CD8-positive, alpha-beta T cell (primary cell): ENCODE measurements at regions of chr3 and their contacts with region 1.

Region 1: GRCh38 chr3:133910422-133910821 is 14.7 kb upstream of the RAB6B start:
- DNase-seq: no peak
- ATAC-seq: no peak
- H3K4me3 ChIP-seq: no peak overlapping the region
- H3K4me3 Mint-ChIP-seq: no peak overlapping the region
- H3K27ac ChIP-seq: no peak overlapping the region
- H3K27ac Mint-ChIP-seq: no peak overlapping the region
- H3K4me1 ChIP-seq: no peaks in the 10 kb centered on the region
- H3K4me1 Mint-ChIP-seq: no peaks in the 10 kb centered on the region
- H3K27me3 ChIP-seq: peaks cover 0 to 2% of the 10 kb centered on the region in 2 experiments
- H3K27me3 Mint-ChIP-seq: peaks cover 20% of the 10 kb centered on the region
- CTCF ChIP-seq: no peak

Region 2: DNA sequence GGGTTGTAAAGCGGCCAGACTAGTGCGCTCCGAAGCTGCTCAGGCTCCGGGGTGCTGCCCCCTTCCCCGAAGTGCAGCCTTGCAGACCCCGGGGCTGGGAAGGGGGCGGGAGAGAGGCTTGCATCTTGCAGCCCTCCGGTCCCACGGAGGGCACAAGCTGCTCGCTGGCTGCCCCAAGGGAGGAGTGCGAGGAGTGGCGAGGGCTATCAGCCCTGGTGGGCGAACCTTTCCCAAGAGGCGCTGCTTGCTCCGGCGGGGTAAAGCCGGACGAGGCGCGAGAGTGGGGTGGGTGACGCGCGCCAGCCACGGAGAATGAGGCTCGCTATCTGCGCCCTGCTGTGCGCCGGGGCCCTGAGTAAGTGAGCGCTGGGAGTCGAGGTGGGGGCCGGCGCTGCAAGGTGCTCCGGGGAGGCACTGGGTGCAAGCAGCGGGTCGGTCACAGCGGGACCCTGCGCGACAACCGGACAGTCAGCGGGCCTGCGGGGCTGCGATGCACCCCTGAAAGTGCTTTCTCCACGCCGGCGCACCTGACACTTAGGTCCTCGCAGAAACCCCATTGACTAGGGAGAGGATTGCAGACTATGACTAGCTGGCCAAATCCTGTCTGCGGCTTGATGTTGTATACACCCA is 236.0 kb before region 1 on chr3:
- CTCF ChIA-PET with region 1: no interaction called
- POLR2A ChIA-PET with region 1: no interaction called
- intact Hi-C with region 1: loop called in 1 of 2 experiments (anchors 5 kb)
- DNase-seq: no peak
- ATAC-seq: no peak
- H3K4me3 ChIP-seq: no peak overlapping the region
- H3K4me3 Mint-ChIP-seq: no peak overlapping the region
- H3K27ac ChIP-seq: no peak overlapping the region
- H3K27ac Mint-ChIP-seq: no peak overlapping the region
- H3K4me1 ChIP-seq: no peaks in the 10 kb centered on the region
- H3K4me1 Mint-ChIP-seq: peaks cover 3% of the 10 kb centered on the region
- H3K27me3 ChIP-seq: peaks cover 10 to 15% of the 10 kb centered on the region in 2 experiments
- H3K27me3 Mint-ChIP-seq: peaks cover 56% of the 10 kb centered on the region
- CTCF ChIP-seq: no peak

Region 3: GRCh38 chr3:133949438-133949837 is 39.0 kb after region 1 on chr3:
- CTCF ChIA-PET with region 1: no interaction called
- POLR2A ChIA-PET with region 1: no interaction called
- intact Hi-C with region 1: no loop called
- DNase-seq: no peak
- ATAC-seq: no peak
- H3K4me3 ChIP-seq: no peak overlapping the region
- H3K4me3 Mint-ChIP-seq: no peak overlapping the region
- H3K27ac ChIP-seq: no peak overlapping the region
- H3K27ac Mint-ChIP-seq: no peak overlapping the region
- H3K4me1 ChIP-seq: no peaks in the 10 kb centered on the region
- H3K4me1 Mint-ChIP-seq: no peaks in the 10 kb centered on the region
- H3K27me3 ChIP-seq: no peaks in the 10 kb centered on the region
- H3K27me3 Mint-ChIP-seq: peaks cover 4% of the 10 kb centered on the region
- CTCF ChIP-seq: no peak

Region 4: DNA sequence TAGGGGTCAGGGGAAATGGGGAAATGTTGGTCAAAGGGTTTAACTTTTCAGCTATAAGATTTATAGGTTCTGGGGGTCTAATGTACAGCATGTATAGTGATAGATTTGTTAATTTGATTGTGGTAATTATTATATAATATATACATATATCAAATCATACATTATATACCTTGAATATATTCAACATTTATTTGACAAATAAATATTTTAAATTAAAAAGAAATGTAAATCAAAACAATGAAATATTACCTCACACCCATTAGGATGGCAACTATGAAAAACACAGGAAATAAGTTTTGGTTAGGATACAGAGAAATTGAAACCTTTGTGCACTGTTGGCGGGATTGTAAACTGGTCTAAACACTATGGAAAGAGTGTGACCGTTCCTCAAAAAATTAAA is 204.3 kb after region 1 on chr3:
- CTCF ChIA-PET with region 1: no interaction called
- POLR2A ChIA-PET with region 1: no interaction called
- intact Hi-C with region 1: no loop called
- DNase-seq: no peak
- ATAC-seq: no peak
- H3K4me3 ChIP-seq: no peak overlapping the region
- H3K4me3 Mint-ChIP-seq: no peak overlapping the region
- H3K27ac ChIP-seq: no peak overlapping the region
- H3K27ac Mint-ChIP-seq: no peak overlapping the region
- H3K4me1 ChIP-seq: no peaks in the 10 kb centered on the region
- H3K4me1 Mint-ChIP-seq: no peaks in the 10 kb centered on the region
- H3K27me3 ChIP-seq: no peaks in the 10 kb centered on the region
- H3K27me3 Mint-ChIP-seq: no peaks in the 10 kb centered on the region
- CTCF ChIP-seq: no peak

Region 5: DNA sequence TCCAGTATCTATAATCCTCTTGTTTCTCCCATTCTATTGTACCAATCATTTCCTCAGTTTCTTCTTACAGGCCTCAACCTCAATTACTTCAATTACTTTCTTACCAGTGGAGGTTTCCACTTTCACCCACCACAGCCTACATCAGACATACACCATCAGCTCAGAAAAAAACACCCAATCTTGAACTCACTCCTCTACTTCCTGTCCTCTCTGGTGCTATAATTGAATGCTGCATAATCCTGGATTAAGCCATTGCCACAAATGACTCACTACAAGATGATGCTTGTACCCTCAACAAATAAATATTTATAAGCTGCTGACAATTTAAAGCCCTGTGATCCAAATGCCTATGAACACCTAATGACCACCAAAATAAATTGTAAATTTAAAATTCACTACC is 321.7 kb after region 1 on chr3:
- CTCF ChIA-PET with region 1: no interaction called
- POLR2A ChIA-PET with region 1: no interaction called
- intact Hi-C with region 1: no loop called
- DNase-seq: peak in 2 of 9 experiments; percentile 11 to 21
- ATAC-seq: peak; percentile 48
- H3K4me3 ChIP-seq: no peak overlapping the region
- H3K4me3 Mint-ChIP-seq: peak overlapping the region; percentile 23
- H3K27ac ChIP-seq: no peak overlapping the region
- H3K27ac Mint-ChIP-seq: no peak overlapping the region
- H3K4me1 ChIP-seq: peaks cover 28% of the 10 kb centered on the region
- H3K4me1 Mint-ChIP-seq: peaks cover 78% of the 10 kb centered on the region
- H3K27me3 ChIP-seq: no peaks in the 10 kb centered on the region
- H3K27me3 Mint-ChIP-seq: no peaks in the 10 kb centered on the region
- CTCF ChIP-seq: no peak

Region 6: GRCh38 chr3:135148398-135148797 is 1238.0 kb after region 1 on chr3:
- CTCF ChIA-PET with region 1: no interaction called
- POLR2A ChIA-PET with region 1: no interaction called
- intact Hi-C with region 1: no loop called
- DNase-seq: no peak
- ATAC-seq: no peak
- H3K4me3 ChIP-seq: no peak overlapping the region
- H3K4me3 Mint-ChIP-seq: no peak overlapping the region
- H3K27ac ChIP-seq: no peak overlapping the region
- H3K27ac Mint-ChIP-seq: no peak overlapping the region
- H3K4me1 ChIP-seq: no peaks in the 10 kb centered on the region
- H3K4me1 Mint-ChIP-seq: no peaks in the 10 kb centered on the region
- H3K27me3 ChIP-seq: no peaks in the 10 kb centered on the region
- H3K27me3 Mint-ChIP-seq: peaks cover 5% of the 10 kb centered on the region
- CTCF ChIP-seq: no peak